Naive thymus-derived CD8-positive, alpha-beta T cell (primary cell): ENCODE measurements at regions of chr1 and their contacts with region 1.

Region 1: GRCh38 chr1:226062558-226063223 is at the start of gene H3-3A:
- DNase-seq: peak; percentile 95 to 99 (median 98)
- ATAC-seq: peak; percentile 77 to 81
- H3K4me3 Mint-ChIP-seq: peak within 1 kb of the TSS; percentile 98 to 100 (median 100)
- H3K27ac Mint-ChIP-seq: peak within 1 kb of the TSS; percentile 98 to 100 (median 99)
- H3K4me1 Mint-ChIP-seq: peaks cover 29 to 69% (median 53%) of the 10 kb centered on the region in 4 donors
- H3K27me3 Mint-ChIP-seq: no peaks in the 10 kb centered on the region
- polyA plus RNA-seq, gene H3-3A: 736 to 904 (median 888) TPM

Region 2: GRCh38 chr1:225428068-225428880 is 634.4 kb before region 1 on chr1:
- POLR2A ChIA-PET with region 1: interaction called, 12 read pairs
- DNase-seq: peak; percentile 87 to 94 (median 90)
- ATAC-seq: peak; percentile 86 to 89
- H3K4me3 Mint-ChIP-seq: peak overlapping the region; percentile 86 to 94 (median 90)
- H3K27ac Mint-ChIP-seq: peak overlapping the region; percentile 28 to 96 (median 93)
- H3K4me1 Mint-ChIP-seq: peaks cover 28 to 45% (median 39%) of the 10 kb centered on the region in 4 donors
- H3K27me3 Mint-ChIP-seq: no peaks in the 10 kb centered on the region

Region 3: DNA sequence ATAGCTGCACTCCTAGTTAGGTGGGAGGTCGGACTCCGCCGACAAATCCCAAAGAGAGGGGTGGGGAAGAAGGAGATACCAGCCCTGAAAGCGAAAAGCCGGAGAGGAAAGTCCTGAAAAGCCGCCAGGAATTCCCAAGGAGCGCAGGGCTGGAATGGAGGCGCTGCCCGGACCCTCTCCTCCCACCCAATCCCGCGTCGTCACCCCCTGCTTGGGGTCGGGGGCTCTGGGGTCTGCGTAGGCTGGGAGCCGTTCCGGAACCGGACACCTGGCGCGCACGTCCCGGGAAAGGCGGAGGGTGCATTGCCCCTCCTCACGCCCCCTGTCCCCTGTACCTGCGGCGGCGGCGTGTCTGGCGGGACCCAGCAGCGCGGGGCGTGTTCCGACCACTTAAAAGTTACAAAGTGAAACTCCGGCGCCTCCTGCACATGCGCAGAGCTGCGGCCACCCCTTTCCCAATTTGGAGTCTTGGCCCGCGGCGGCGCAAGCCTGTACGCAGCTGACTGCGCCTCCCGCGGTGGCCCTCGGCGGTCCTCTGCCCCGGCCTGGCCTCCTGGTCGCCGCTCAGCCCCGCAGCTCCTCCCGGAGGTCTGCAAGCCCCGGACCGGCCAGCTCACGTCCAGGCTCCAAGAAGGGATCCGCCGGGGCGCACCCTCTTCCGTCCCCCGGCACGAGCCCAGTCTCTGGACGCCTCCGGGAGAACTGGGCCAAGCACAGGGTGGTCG is 180.6 kb before region 1 on chr1 and contains the start of gene TMEM63A:
- POLR2A ChIA-PET with region 1: interaction called, 22 read pairs
- DNase-seq: peak; percentile 83 to 95 (median 88)
- ATAC-seq: peak; percentile 71 to 76
- H3K4me3 Mint-ChIP-seq: peak within 1 kb of the TSS; percentile 87 to 99 (median 94)
- H3K27ac Mint-ChIP-seq: peak within 1 kb of the TSS; percentile 87 to 98 (median 94)
- H3K4me1 Mint-ChIP-seq: peaks cover 28 to 55% (median 49%) of the 10 kb centered on the region in 4 donors
- H3K27me3 Mint-ChIP-seq: no peaks in the 10 kb centered on the region
- polyA plus RNA-seq, gene TMEM63A: 34.4 to 53.5 (median 45.1) TPM

Region 4: GRCh38 chr1:225987491-225988316 is 75.0 kb before region 1 on chr1:
- POLR2A ChIA-PET with region 1: interaction called, 547 read pairs
- DNase-seq: peak in 3 of 10 donors; percentile 53 to 56 (median 56)
- ATAC-seq: peak; percentile 53 to 59
- H3K4me3 Mint-ChIP-seq: no peak overlapping the region
- H3K27ac Mint-ChIP-seq: peak overlapping the region in 6 of 10 donors; percentile 22 to 77 (median 58)
- H3K4me1 Mint-ChIP-seq: peaks cover 4 to 34% (median 19%) of the 10 kb centered on the region in 4 donors
- H3K27me3 Mint-ChIP-seq: no peaks in the 10 kb centered on the region

Region 5: GRCh38 chr1:226050133-226050532 is 12.6 kb before region 1 on chr1:
- POLR2A ChIA-PET with region 1: interaction called, 11 read pairs
- DNase-seq: no peak
- ATAC-seq: no peak
- H3K4me3 Mint-ChIP-seq: no peak overlapping the region
- H3K27ac Mint-ChIP-seq: no peak overlapping the region
- H3K4me1 Mint-ChIP-seq: peaks cover 0 to 8% (median 2%) of the 10 kb centered on the region in 4 donors
- H3K27me3 Mint-ChIP-seq: no peaks in the 10 kb centered on the region

Region 6: GRCh38 chr1:226083302-226084101 is 20.8 kb after region 1 on chr1:
- POLR2A ChIA-PET with region 1: interaction called, 31 read pairs
- DNase-seq: peak; percentile 84 to 96 (median 91)
- ATAC-seq: peak; percentile 94
- H3K4me3 Mint-ChIP-seq: peak overlapping the region; percentile 87 to 97 (median 92)
- H3K27ac Mint-ChIP-seq: peak overlapping the region in 8 of 10 donors; percentile 59 to 92 (median 84)
- H3K4me1 Mint-ChIP-seq: peaks cover 5 to 18% (median 11%) of the 10 kb centered on the region in 4 donors
- H3K27me3 Mint-ChIP-seq: peaks cover 0 to 3% (median 0%) of the 10 kb centered on the region in 5 donors

Region 7: DNA sequence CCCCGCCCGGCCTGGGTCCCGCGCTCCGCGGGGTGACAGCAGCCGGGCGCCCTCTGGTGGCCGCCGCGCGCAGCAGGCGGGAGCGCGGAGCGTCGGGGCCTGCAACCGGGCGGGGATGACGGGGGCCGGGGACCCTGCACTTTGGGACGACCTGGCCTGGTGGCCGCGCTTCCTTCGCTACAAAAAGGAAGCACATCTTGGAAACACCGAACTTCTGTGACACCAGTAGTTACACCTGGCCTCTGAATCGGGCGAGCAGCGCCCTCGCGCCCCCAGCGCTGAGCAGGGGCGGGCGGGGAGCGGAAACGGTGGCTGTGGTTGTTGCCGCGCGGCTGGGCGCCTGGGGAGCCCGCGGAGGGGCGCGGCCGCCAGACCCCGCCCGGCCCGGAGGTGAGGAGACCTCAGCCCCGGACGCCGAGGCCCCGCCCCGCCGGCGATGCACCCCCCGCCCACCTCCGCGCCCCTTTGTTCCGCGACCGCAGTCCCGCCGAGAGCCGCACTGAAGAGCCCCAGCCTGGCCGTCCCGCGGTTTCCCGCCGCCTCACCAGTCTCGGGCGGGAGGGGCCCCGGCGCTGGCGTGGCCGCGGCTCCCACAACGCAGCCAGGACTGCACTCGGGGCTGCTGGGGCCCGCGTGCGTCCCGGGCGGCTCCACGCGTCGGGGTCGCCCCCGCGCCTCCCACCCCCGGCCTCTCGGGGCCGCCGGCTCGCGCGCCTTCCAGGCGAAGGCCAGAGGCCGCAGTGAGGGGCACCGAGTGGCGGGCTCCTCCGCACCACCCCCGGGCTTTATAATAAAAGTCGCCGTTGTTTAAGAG is 59.1 kb after region 1 on chr1:
- POLR2A ChIA-PET with region 1: interaction called, 30 read pairs
- DNase-seq: peak; percentile 51 to 87 (median 74)
- ATAC-seq: peak; percentile 64 to 69
- H3K4me3 Mint-ChIP-seq: peak overlapping the region; percentile 49 to 89 (median 82)
- H3K27ac Mint-ChIP-seq: peak overlapping the region in 6 of 10 donors; percentile 36 to 98 (median 84)
- H3K4me1 Mint-ChIP-seq: peaks cover 17 to 67% (median 38%) of the 10 kb centered on the region in 4 donors
- H3K27me3 Mint-ChIP-seq: peaks cover 0 to 3% (median 0%) of the 10 kb centered on the region in 5 donors

Region 8: GRCh38 chr1:226209307-226210059 is 146.8 kb after region 1 on chr1:
- POLR2A ChIA-PET with region 1: no interaction called
- DNase-seq: no peak
- ATAC-seq: no peak
- H3K4me3 Mint-ChIP-seq: no peak overlapping the region
- H3K27ac Mint-ChIP-seq: no peak overlapping the region
- H3K4me1 Mint-ChIP-seq: no peaks in the 10 kb centered on the region
- H3K27me3 Mint-ChIP-seq: peaks cover 0 to 4% (median 0%) of the 10 kb centered on the region in 5 donors